ENCODE measurements at regions of chr1 and their contacts with region 1.

Region 1: DNA sequence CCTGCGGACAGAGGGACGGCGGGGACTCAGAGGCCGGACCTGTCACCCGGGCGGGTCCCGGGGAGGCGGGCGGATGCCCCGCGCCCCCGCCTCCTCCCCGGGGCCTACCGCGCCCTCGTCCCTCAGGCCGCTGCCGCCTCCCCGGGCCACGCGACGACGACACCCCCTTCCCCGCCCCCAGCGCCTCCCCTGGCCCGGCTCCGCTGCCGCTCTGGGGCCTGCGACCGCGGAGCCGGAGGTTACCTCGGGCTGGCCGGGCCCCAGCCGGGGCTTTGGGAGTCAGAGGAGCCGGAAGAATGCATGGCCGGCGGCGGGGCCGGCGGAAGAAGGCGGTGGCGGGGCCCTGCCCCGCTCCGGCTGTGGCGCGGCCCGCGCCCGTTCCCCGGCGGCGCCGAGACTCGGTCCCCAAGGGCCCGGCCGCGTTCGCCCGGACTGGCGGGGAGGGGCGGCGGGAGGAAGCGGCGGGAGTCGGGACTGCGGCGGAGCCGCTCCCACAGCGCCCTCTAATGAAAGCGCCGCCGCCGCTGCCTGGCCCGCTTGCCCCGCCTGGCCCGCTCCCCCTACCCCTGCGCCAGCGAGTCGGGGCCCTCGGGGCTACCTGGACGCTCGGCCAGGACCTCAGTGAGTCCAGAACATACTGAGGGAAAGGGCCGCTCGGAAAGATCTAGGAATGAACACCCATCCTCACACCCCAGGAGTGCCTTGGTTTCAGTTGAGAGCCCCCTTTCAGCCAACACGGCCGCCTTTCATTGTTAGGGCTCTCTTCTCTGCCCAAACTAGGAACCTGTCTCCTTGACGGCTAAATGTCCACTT is at the start of gene LPGAT1:
- DNase-seq: peak in 1 of 2 experiments; percentile 80
- H3K4me3 ChIP-seq: peak within 1 kb of the TSS; percentile 75
- H3K27ac ChIP-seq: peak within 1 kb of the TSS; percentile 29; the same call in 1 of the 2 replicates
- H3K4me1 ChIP-seq: peaks cover 15% of the 10 kb centered on the region; the same call in 1 of the 2 replicates
- H3K27me3 ChIP-seq: no peaks in the 10 kb centered on the region
- CTCF ChIP-seq: peak; percentile 62
- total RNA-seq, gene LPGAT1: 46.0 and 46.8 TPM in 2 replicates

Region 2: GRCh38 chr1:211870156-211870555 is 39.6 kb after region 1 on chr1:
- CTCF ChIA-PET with region 1: no interaction called
- POLR2A ChIA-PET with region 1: no interaction called
- intact Hi-C with region 1: no loop called
- DNase-seq: no peak
- H3K4me3 ChIP-seq: no peak overlapping the region
- H3K27ac ChIP-seq: no peak overlapping the region
- H3K4me1 ChIP-seq: no peaks in the 10 kb centered on the region
- H3K27me3 ChIP-seq: no peaks in the 10 kb centered on the region
- CTCF ChIP-seq: no peak

Region 3: DNA sequence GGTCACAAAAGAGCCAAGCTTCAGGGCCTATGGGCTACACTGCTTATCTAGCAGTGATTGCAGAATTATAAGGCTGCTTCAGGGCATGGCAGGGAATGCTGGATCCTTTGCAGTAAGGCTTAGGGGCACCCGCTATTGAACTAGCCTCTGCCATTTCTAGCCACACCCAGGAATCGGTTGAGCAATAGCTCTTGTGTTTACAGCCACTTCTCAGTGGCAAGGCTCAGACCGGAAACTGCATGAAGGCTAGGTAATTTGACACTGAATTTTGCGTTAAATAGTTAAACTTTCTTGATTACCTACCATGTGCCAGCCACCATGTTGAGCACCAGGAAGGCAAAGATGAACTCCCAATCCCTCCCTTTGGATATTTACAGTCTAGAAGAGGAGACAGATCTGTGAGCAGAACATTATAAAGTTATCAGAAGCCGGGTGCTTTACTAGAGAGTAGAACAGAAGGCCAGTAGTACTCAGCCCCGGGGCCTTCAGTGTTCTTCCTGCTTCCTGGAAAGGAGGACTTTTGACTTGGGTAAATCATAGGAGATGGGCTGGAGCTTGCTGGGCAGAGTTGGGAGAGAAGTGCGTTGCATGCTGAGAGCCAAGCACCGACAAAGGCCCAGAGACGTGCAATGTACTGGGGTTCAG is 98.6 kb after region 1 on chr1:
- CTCF ChIA-PET with region 1: no interaction called
- POLR2A ChIA-PET with region 1: interaction called, 8 read pairs
- intact Hi-C with region 1: loop called (anchors 2 kb)
- DNase-seq: peak; percentile 48 to 83
- H3K4me3 ChIP-seq: no peak overlapping the region
- H3K27ac ChIP-seq: peak overlapping the region; percentile 71
- H3K4me1 ChIP-seq: peaks cover 51% of the 10 kb centered on the region
- H3K27me3 ChIP-seq: no peaks in the 10 kb centered on the region
- CTCF ChIP-seq: no peak

Region 4: DNA sequence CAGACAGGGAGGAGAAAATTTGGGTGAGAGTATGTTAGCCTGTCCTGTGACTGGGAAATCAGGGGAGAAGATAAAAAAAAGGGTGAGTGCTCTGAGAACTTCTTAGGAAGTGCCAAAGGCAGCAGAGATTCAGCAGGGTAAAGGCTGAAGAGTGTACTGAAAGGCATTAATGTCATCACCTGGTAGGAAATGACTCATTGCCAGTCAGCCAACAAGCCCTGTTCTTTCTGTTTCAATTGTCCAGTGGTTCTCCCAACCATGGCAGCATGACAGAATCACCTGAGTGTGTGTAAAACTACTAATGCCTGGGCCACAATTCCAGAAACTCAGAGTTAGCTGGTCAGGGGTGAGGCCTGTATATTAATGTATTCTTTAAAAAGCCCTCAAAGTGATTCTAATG is 121.3 kb after region 1 on chr1:
- CTCF ChIA-PET with region 1: no interaction called
- POLR2A ChIA-PET with region 1: no interaction called
- intact Hi-C with region 1: loop called (anchors 5 kb)
- DNase-seq: peak; percentile 42 to 81
- H3K4me3 ChIP-seq: no peak overlapping the region
- H3K27ac ChIP-seq: peak overlapping the region; percentile 86
- H3K4me1 ChIP-seq: peaks cover 16% of the 10 kb centered on the region
- H3K27me3 ChIP-seq: no peaks in the 10 kb centered on the region
- CTCF ChIP-seq: no peak

Region 5: GRCh38 chr1:212012034-212012740 is 181.7 kb after region 1 on chr1:
- CTCF ChIA-PET with region 1: no interaction called
- POLR2A ChIA-PET with region 1: no interaction called
- intact Hi-C with region 1: loop called (anchors 5 kb)
- DNase-seq: peak; percentile 49 to 53
- H3K4me3 ChIP-seq: no peak overlapping the region
- H3K27ac ChIP-seq: no peak overlapping the region
- H3K4me1 ChIP-seq: peaks cover 9% of the 10 kb centered on the region; the same call in 1 of the 2 replicates
- H3K27me3 ChIP-seq: no peaks in the 10 kb centered on the region
- CTCF ChIP-seq: peak; percentile 93

Region 6: DNA sequence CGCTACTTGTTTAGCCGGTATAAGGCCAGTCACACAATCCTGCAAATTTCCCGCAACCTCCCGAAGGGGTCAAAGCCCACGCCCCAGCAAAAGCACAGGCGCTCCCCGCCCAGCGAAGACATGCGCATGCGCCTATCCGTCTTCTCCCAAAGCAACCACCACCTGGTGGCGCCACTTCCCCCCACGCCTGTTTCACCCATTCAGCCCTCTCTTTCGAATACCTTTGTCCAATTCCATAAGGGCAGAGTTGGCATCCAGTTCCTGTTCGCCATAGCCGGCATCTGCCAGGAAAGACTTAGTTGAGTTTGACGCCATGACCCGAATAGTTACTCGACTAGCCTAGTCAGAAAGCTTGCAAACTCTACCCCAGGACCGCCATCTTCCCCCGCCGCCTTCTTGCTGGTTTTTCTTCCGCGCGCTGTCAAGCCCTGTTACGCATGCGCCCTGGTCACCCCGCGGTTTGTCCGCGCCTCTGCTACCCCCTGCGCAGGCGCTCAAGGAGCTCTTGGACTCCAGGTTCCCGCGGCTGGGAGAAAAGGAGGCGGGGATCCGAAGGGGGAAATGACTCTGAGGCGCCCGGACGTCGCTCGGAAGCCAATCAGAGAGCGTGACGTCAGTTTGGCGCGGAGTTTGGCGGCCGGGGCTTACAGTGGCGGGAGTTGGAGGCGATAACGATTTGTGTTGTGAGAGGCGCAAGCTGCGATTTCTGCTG is 204.7 kb after region 1 on chr1 and contains the starts of genes DTL and INTS7:
- CTCF ChIA-PET with region 1: no interaction called
- POLR2A ChIA-PET with region 1: no interaction called
- intact Hi-C with region 1: loop called (anchors 10 kb)
- DNase-seq: peak; percentile 97 to 98
- H3K4me3 ChIP-seq: peak within 1 kb of the TSS; percentile 93
- H3K27ac ChIP-seq: peak within 1 kb of the TSS; percentile 55
- H3K4me1 ChIP-seq: peaks cover 50% of the 10 kb centered on the region
- H3K27me3 ChIP-seq: no peaks in the 10 kb centered on the region
- CTCF ChIP-seq: peak; percentile 81
- total RNA-seq, gene DTL: 22.5 TPM in 2 replicates
- total RNA-seq, gene INTS7: 18.4 and 24.7 TPM in 2 replicates